Colonic mucosa (tissue), 4 donors: ENCODE measurements at regions of chr10 and their contacts with region 1.

Region 1: DNA sequence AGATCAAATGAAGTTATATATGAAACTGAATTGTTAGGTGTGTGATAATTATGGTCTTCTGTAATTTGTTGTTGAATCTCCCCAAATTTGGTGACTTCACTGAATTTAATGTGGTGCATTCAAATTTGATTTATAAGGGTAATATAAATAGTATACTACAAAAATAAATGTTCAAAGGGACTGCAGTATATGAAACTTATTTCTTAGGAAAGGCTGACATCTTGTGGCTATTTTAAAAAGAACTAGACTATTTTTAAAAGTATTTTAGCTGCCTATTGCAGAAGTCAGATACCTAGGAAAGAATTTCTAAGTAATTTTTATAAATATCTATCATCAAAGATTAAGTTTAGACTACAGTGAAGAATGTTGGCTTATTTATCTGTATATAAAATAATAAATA is 36.6 kb downstream of the ATRNL1 start:
- DNase-seq: no peak
- H3K4me3 ChIP-seq: no peak overlapping the region
- H3K27ac ChIP-seq: no peak overlapping the region
- H3K4me1 ChIP-seq: no peaks in the 10 kb centered on the region
- H3K27me3 ChIP-seq: no peaks in the 10 kb centered on the region
- CTCF ChIP-seq: peak; percentile 19

Region 2: DNA sequence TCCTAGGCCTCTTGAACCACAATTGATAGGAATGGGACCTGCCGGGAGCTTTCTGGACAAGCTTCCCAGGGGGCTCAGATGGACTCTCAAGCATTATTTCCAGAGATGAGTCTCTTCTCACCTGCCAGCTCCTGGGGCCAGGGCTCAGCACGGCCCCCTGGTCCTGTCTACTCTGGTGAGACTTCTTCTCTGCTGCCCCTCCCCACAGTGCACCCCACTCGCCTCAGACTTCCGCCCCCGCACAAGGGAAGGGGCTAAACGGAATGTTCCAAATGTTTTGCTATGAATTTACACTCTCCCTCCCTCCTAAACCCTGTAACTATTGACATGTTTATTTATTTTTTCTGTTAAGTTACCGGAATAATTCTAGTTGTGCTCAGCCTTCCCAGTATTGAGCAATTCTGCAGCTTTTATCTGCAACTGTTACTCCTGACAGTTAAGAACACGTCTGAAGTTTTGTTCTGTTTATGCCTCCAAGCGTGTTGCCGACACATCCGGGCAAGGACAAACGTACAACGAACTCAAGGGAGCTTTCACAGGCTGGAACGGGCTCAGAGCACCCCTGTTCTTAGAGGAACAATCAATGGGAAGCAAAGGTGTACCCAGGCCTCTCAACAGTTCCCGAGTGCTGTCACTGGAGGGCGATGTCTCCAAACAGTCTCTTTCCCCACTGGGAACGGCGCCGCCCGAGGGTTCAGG is 253.0 kb before region 1 on chr10:
- intact Hi-C with region 1: loop called (anchors 5 kb)
- DNase-seq: peak; percentile 70
- H3K4me3 ChIP-seq: no peak overlapping the region
- H3K27ac ChIP-seq: no peak overlapping the region
- H3K4me1 ChIP-seq: no peaks in the 10 kb centered on the region
- H3K27me3 ChIP-seq: no peaks in the 10 kb centered on the region
- CTCF ChIP-seq: peak; percentile 63